ENCODE measurements at regions of chr12 and their contacts with region 1.

Region 1: GRCh38 chr12:34022079-34022830 is at the start of gene ALG10:
- DNase-seq: peak; percentile 96 to 97 (median 96)
- H3K4me3 ChIP-seq: peak within 1 kb of the TSS; percentile 53 to 86 (median 67)
- H3K4me3 Mint-ChIP-seq: peak within 1 kb of the TSS; percentile 91 to 97
- H3K27ac ChIP-seq: peak within 1 kb of the TSS; percentile 75 to 88
- H3K27ac Mint-ChIP-seq: peak within 1 kb of the TSS; percentile 92 to 96 (median 95)
- H3K4me1 ChIP-seq: peaks cover 11 to 18% of the 10 kb centered on the region in 2 donors
- H3K4me1 Mint-ChIP-seq: peaks cover 24% of the 10 kb centered on the region
- H3K27me3 ChIP-seq: no peaks in the 10 kb centered on the region
- H3K27me3 Mint-ChIP-seq: peaks cover 0 to 2% (median 0%) of the 10 kb centered on the region in 3 donors
- CTCF ChIP-seq: peak; percentile 78
- polyA plus RNA-seq, gene ALG10: 1.5 to 2.0 (median 1.6) TPM

Region 2: DNA sequence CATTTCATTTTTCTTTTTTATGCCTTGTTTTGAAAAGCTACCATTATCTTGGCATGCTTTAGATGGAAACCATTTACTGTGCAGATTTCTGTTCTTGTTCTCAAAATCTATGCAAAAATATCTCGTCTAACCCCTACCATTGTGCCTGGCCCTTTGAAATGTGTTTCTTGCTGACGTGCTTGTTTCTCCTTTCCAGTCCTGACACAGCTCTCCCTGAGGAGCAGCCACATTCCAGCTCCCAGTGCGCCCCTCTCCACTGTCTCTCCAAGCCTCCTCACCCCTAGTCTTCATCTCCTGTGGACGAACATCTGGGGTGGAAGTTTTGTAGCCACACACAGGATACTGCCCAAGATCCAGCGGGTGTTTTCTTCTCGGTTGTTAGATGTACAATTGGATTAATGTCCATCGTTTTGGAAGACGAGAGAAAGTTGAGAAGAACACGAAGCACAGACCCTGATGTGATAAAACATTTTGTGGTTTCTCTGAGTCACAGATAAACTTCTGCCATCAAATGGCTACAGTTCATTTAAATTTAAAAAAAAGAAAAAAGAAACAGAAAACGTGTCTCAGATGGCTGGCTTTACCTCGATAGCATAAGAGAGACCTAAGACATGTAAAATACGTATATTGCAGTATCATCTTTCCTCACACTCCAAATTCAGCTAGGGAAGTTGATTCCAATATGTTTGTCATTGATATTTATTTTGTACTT is 1644.8 kb before region 1 on chr12:
- intact Hi-C with region 1: loop called in 1 of 2 experiments (anchors 10 kb)
- DNase-seq: no peak
- H3K4me3 ChIP-seq: no peak overlapping the region
- H3K4me3 Mint-ChIP-seq: no peak overlapping the region
- H3K27ac ChIP-seq: no peak overlapping the region
- H3K27ac Mint-ChIP-seq: no peak overlapping the region
- H3K4me1 ChIP-seq: peaks cover 10 to 13% of the 10 kb centered on the region in 2 donors
- H3K4me1 Mint-ChIP-seq: peaks cover 15% of the 10 kb centered on the region
- H3K27me3 ChIP-seq: no peaks in the 10 kb centered on the region
- H3K27me3 Mint-ChIP-seq: no peaks in the 10 kb centered on the region
- CTCF ChIP-seq: no peak

Region 3: GRCh38 chr12:34108405-34108803 is 86.1 kb after region 1 on chr12:
- intact Hi-C with region 1: no loop called
- DNase-seq: no peak
- H3K4me3 ChIP-seq: no peak overlapping the region
- H3K4me3 Mint-ChIP-seq: peak overlapping the region in 1 of 2 donors; percentile 49
- H3K27ac ChIP-seq: no peak overlapping the region
- H3K27ac Mint-ChIP-seq: no peak overlapping the region
- H3K4me1 ChIP-seq: no peaks in the 10 kb centered on the region
- H3K4me1 Mint-ChIP-seq: no peaks in the 10 kb centered on the region
- H3K27me3 ChIP-seq: peaks cover 0 to 29% of the 10 kb centered on the region in 2 donors
- H3K27me3 Mint-ChIP-seq: peaks cover 23 to 41% (median 25%) of the 10 kb centered on the region in 3 donors
- CTCF ChIP-seq: no peak